ENCODE measurements at regions of chr11 and their contacts with region 1.

Region 1: GRCh38 chr11:67239783-67240575 is 26.3 kb upstream of the GRK2 start:
- DNase-seq: peak; percentile 92
- ATAC-seq: peak; percentile 98
- H3K4me3 ChIP-seq: peak overlapping the region; percentile 76 to 98
- H3K27ac ChIP-seq: peak overlapping the region; percentile 95
- H3K4me1 ChIP-seq: peaks cover 33% of the 10 kb centered on the region
- H3K27me3 ChIP-seq: no peaks in the 10 kb centered on the region
- CTCF ChIP-seq: no peak

Region 2: GRCh38 chr11:67045341-67045764 is 194.6 kb before region 1 on chr11:
- CTCF ChIA-PET with region 1: no interaction called
- POLR2A ChIA-PET with region 1: interaction called, 12 read pairs
- in situ Hi-C with region 1: no loop called
- intact Hi-C with region 1: no loop called
- DNase-seq: no peak
- ATAC-seq: peak; percentile 80
- H3K4me3 ChIP-seq: no peak overlapping the region
- H3K27ac ChIP-seq: no peak overlapping the region
- H3K4me1 ChIP-seq: no peaks in the 10 kb centered on the region; the same call in 1 of the 2 replicates
- H3K27me3 ChIP-seq: no peaks in the 10 kb centered on the region
- CTCF ChIP-seq: no peak

Region 3: GRCh38 chr11:67146516-67147226 is 93.3 kb before region 1 on chr11:
- CTCF ChIA-PET with region 1: no interaction called
- POLR2A ChIA-PET with region 1: interaction called, 14 read pairs
- in situ Hi-C with region 1: no loop called
- intact Hi-C with region 1: no loop called
- DNase-seq: no peak
- ATAC-seq: no peak
- H3K4me3 ChIP-seq: no peak overlapping the region
- H3K27ac ChIP-seq: no peak overlapping the region
- H3K4me1 ChIP-seq: no peaks in the 10 kb centered on the region
- H3K27me3 ChIP-seq: no peaks in the 10 kb centered on the region
- CTCF ChIP-seq: no peak

Region 4: DNA sequence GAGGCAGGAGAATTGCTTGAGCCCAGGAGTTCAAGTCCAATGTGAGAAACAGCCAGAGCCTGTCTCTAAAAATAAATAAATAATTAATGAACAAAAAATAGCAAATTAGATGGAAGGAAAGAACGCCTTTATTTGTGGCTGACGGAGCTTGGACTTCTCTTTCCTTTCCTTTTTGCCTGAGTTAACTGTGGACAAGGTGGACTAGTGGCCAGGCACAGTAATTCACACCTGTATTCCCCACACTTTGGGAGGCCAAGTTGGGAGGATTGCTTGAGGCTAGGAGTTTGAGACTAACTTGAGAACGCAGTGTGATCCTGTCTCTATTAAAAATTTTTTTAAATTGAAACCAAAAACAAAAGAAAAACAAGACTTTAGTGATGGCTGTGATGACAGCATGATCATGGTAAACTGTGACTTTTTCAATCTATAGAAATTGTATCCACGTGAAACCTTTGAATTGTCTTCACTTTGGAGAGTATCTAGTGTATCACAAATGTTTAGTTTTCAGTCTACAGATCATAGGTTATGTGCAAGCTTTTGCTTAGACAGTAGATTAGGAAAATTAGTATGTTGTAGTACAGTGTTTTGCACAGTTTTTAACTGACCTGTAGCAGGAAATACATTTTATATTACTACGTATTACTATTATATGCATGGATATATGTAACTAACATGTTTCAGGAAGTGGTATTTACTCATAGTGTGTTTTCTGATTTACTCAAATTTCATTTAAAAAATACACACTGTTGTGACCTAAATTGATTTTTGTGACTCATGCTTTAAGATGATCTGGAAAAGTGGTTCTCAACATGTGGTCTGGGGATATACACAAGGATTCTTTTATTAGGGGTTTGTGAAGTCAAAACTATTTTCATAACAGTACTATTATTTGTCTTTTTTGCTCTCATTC is 78.8 kb before region 1 on chr11:
- CTCF ChIA-PET with region 1: no interaction called
- POLR2A ChIA-PET with region 1: no interaction called
- in situ Hi-C with region 1: loop called (anchors 10 kb)
- intact Hi-C with region 1: no loop called
- DNase-seq: no peak
- ATAC-seq: no peak
- H3K4me3 ChIP-seq: no peak overlapping the region
- H3K27ac ChIP-seq: no peak overlapping the region
- H3K4me1 ChIP-seq: no peaks in the 10 kb centered on the region; the same call in 1 of the 2 replicates
- H3K27me3 ChIP-seq: no peaks in the 10 kb centered on the region
- CTCF ChIP-seq: no peak